Gastrocnemius medialis (tissue), 4 donors: ENCODE measurements at regions of chr12 and their contacts with region 1.

Region 1: DNA sequence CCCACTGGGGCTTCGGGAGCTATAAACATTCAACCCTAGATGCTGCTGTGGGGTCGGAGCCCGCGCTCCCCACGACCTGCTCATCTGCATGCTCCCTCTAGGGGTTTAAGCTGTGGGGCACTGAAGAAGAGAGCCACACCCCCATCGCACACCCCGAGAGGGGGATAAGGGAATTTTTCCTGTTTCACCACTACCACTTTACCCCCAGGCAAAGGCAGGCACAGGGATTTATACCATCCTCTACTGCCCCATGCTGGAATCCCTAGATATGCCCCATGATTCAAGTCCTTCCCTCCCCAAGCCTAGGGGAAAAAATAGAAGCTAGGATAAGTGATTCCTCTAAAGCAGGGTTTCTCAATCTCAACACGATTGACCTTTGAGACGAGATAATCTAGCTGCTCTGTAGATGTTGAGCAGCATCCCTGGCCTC is 59.9 kb upstream of the CCDC60 start:
- DNase-seq: no peak
- ATAC-seq: peak in 1 of 2 donors; percentile 74
- H3K4me3 ChIP-seq: no peak overlapping the region
- H3K27ac ChIP-seq: no peak overlapping the region
- H3K4me1 ChIP-seq: no peaks in the 10 kb centered on the region
- H3K27me3 ChIP-seq: no peaks in the 10 kb centered on the region
- CTCF ChIP-seq: peak in 3 of 5 experiments; percentile 25 to 39 (median 33)
- POLR2A ChIP-seq: no peak

Region 2: DNA sequence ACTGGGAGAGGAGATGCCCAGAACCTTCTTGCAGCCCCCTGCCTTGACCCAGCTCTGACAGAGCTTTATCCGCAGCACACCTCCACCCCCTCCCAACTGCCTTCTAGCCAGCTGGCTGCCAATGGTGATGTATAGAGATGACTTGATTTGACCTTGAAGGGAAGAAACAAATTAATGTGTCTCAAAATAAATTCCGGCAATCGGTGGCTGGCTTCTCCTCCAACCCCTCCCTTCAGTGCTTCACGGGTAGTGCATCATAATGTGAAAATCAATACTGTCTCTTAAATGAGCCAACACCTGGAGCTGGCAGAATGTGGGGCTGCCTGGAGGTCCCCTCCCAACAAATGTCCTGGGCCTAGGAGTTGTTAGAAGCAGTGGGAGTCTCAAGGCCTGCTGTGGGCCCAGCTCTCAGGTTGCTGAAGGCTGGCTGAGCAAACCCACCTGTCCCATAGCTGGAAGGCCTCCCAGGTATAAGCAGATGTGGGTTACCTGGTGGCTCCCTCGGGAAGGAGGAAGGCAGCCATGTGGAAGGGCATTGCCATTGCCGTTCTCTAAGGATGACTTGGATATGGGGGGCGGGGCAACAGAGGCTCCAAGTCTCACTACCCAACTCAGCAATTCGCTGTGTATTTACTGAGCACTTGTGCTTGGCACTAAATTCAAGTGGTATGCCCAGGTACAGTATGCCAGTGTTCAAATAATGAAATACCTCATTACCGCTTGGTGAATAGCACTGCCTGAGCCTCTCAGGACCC is 72.7 kb before region 1 on chr12:
- in situ Hi-C with region 1: no loop called
- intact Hi-C with region 1: loop called (anchors 2 kb)
- DNase-seq: no peak
- ATAC-seq: no peak
- H3K4me3 ChIP-seq: no peak overlapping the region
- H3K27ac ChIP-seq: no peak overlapping the region
- H3K4me1 ChIP-seq: peaks cover 19 to 20% of the 10 kb centered on the region in 2 donors
- H3K27me3 ChIP-seq: no peaks in the 10 kb centered on the region
- CTCF ChIP-seq: no peak
- POLR2A ChIP-seq: no peak